ENCODE measurements at regions of chr20 and their contacts with region 1.

Region 1: DNA sequence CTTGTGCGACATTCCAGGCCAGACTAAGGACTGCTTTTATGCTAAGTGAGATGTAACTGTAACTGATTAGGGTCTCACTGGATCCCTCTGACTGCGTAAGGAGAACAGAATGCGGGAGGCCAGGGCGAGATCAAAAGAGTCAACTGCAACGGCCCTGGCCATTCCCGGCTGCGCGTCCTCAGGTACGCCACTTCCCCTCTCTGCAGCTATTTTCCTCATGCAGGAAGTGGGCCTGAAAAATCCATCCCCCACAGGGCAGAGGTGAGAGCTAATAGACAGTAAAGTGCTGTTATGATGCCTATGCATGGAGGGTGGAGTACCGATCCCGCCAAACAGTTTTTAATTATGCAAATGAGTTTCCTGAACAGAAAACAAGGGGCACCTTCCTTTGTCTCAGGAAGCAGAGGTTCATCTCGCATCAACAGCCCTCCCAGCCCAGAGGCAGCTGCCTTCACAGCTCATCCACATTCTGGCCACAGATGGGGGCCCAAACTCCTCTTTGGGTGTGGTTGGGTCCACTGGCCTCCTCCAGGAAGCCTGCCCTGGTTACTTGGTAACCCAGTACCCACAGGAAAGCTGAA is 9.3 kb downstream of the PREX1 start:
- DNase-seq: peak; percentile 76
- ATAC-seq: peak; percentile 77
- H3K4me3 ChIP-seq: peak overlapping the region; percentile 1 to 38 (median 28)
- H3K4me3 Mint-ChIP-seq: peak overlapping the region; percentile 92
- H3K27ac ChIP-seq: peak overlapping the region; percentile 63 to 84
- H3K27ac Mint-ChIP-seq: peak overlapping the region; percentile 88
- H3K4me1 ChIP-seq: peaks cover 93 to 97% of the 10 kb centered on the region in 2 donors
- H3K4me1 Mint-ChIP-seq: no peaks in the 10 kb centered on the region
- H3K27me3 ChIP-seq: no peaks in the 10 kb centered on the region
- H3K27me3 Mint-ChIP-seq: no peaks in the 10 kb centered on the region
- CTCF ChIP-seq: no peak

Region 2: DNA sequence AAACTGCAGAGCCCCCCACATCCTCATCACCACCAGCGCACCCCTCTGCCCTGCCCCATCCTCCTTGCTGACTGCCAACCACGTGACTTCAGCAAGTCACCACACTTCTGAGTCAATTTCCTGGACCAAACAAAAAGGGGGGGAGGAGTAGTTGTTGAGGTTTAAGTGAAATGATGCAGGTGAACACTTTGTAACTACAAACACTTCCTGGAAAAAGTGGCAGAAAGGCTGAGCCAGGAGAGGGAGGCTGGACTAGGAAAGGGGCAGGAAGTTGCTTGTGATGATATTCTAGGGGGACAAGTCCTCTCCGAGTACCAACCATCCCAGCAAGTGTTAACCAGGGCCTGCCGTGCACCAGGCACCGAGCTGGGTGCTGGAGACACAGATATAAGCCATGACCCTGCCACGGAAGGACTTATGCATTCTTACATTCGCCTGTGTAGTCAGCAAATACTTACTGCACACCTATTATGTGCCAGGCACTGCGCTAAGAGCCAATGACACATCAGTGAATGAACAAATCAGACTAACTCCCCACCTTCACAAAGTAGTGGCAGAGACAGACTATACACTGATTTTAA is 58.0 kb before region 1 on chr20:
- CTCF ChIA-PET with region 1: no interaction called
- POLR2A ChIA-PET with region 1: interaction called, 6 read pairs
- intact Hi-C with region 1: loop called (anchors 2 kb)
- DNase-seq: peak; percentile 74
- ATAC-seq: peak; percentile 84
- H3K4me3 ChIP-seq: peak overlapping the region in 4 of 5 experiments; percentile 8 to 30 (median 18)
- H3K4me3 Mint-ChIP-seq: peak overlapping the region; percentile 89
- H3K27ac ChIP-seq: peak overlapping the region; percentile 76 to 80
- H3K27ac Mint-ChIP-seq: peak overlapping the region; percentile 98
- H3K4me1 ChIP-seq: peaks cover 41 to 69% of the 10 kb centered on the region in 2 donors
- H3K4me1 Mint-ChIP-seq: peaks cover 79% of the 10 kb centered on the region
- H3K27me3 ChIP-seq: no peaks in the 10 kb centered on the region
- H3K27me3 Mint-ChIP-seq: no peaks in the 10 kb centered on the region
- CTCF ChIP-seq: no peak

Region 3: GRCh38 chr20:50478162-50479036 is 1659.9 kb after region 1 on chr20:
- CTCF ChIA-PET with region 1: no interaction called
- POLR2A ChIA-PET with region 1: no interaction called
- intact Hi-C with region 1: no loop called
- DNase-seq: peak; percentile 84
- ATAC-seq: peak; percentile 99
- H3K4me3 ChIP-seq: no peak overlapping the region
- H3K4me3 Mint-ChIP-seq: peak overlapping the region; percentile 44
- H3K27ac ChIP-seq: no peak overlapping the region
- H3K27ac Mint-ChIP-seq: peak overlapping the region; percentile 67
- H3K4me1 ChIP-seq: peaks cover 20 to 32% of the 10 kb centered on the region in 2 donors
- H3K4me1 Mint-ChIP-seq: peaks cover 33% of the 10 kb centered on the region
- H3K27me3 ChIP-seq: no peaks in the 10 kb centered on the region
- H3K27me3 Mint-ChIP-seq: no peaks in the 10 kb centered on the region
- CTCF ChIP-seq: peak; percentile 73

Measured in B cell (primary cell).